A673 (cell line): ENCODE measurements at regions of chr3 and their contacts with region 1.

Region 1: GRCh38 chr3:9362731-9363530 is at the start of gene THUMPD3:
- DNase-seq: peak; percentile 96
- H3K4me3 ChIP-seq: peak within 1 kb of the TSS; percentile 68
- H3K27ac ChIP-seq: peak within 1 kb of the TSS; percentile 85
- H3K4me1 ChIP-seq: peaks cover 11% of the 10 kb centered on the region
- H3K27me3 ChIP-seq: no peaks in the 10 kb centered on the region
- CTCF ChIP-seq: no peak
- total RNA-seq, gene THUMPD3: 79.2 and 84.6 TPM in 2 replicates

Region 2: DNA sequence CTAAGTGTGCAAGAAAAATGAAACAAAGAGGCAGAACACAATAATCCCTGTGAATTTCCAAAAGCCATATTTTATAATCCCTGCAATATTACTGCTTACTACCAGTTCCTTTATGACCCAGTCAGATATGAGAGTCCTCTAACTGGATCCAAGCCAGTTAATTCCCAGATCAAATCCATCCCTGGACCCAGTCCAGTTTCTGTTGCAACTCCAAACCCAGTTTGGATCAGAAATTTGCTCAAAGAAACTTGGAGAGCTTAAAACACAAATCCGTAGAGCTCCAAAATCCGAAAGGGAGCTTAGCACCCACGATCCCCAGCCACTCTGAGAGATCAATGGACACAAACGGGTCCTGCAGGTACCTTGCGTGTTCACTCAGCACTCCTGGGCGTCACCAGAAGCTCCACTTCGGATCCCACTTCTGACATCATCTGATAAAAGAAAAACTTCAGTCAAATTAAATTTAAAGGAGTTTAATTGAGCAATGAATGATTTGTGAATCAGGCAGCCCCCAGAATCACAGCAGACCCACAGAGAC is 32.7 kb before region 1 on chr3:
- CTCF ChIA-PET with region 1: no interaction called
- POLR2A ChIA-PET with region 1: interaction called, 11 read pairs
- intact Hi-C with region 1: no loop called
- DNase-seq: no peak
- H3K4me3 ChIP-seq: no peak overlapping the region
- H3K27ac ChIP-seq: no peak overlapping the region
- H3K4me1 ChIP-seq: no peaks in the 10 kb centered on the region
- H3K27me3 ChIP-seq: no peaks in the 10 kb centered on the region
- CTCF ChIP-seq: no peak